Activated CD8-positive, alpha-beta T cell treated with anti-CD3 and anti-CD28 coated beads for 36 hours (primary cell): ENCODE measurements at regions of chr16 and their contacts with region 1.

Region 1: DNA sequence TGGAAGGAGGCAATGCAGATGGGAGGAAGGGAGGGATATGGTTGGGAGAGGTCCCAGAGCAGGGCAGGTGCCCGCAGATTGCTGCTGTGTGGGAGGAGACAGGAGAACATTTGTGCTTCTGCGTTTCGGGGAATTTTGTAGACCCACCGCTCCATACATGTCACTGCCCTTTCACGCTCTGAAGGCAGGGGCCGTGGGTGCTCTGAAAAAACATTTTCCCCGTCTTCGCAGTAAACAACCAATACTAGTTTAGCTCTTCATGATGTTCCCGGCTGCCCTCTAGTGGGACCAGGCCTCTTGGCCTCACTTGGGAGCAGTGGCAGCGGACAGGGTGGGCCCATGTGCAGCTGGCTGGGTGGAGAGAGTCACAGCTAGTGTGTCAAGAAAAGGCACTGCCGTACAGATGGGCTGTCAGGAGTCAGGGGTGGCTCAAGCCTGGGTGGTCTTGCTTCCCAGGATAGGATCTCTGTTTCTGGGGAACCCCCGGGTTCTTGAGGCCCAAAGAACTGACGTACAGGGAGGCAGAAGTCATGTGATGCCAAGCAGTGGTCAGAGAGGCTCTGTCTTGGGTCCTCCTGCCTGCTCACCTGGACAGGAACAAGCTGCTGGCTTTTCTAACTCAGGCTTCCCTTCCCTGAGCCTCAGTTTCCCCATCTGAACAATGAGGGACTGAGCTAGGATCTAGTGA is 46.5 kb upstream of the CPNE2 start:
- DNase-seq: peak; percentile 77
- ATAC-seq: no peak
- H3K4me3 Mint-ChIP-seq: no peak overlapping the region
- H3K27ac Mint-ChIP-seq: peak overlapping the region; percentile 99
- H3K4me1 Mint-ChIP-seq: peaks cover 77% of the 10 kb centered on the region
- H3K27me3 Mint-ChIP-seq: no peaks in the 10 kb centered on the region
- CTCF ChIP-seq: no peak

Region 2: DNA sequence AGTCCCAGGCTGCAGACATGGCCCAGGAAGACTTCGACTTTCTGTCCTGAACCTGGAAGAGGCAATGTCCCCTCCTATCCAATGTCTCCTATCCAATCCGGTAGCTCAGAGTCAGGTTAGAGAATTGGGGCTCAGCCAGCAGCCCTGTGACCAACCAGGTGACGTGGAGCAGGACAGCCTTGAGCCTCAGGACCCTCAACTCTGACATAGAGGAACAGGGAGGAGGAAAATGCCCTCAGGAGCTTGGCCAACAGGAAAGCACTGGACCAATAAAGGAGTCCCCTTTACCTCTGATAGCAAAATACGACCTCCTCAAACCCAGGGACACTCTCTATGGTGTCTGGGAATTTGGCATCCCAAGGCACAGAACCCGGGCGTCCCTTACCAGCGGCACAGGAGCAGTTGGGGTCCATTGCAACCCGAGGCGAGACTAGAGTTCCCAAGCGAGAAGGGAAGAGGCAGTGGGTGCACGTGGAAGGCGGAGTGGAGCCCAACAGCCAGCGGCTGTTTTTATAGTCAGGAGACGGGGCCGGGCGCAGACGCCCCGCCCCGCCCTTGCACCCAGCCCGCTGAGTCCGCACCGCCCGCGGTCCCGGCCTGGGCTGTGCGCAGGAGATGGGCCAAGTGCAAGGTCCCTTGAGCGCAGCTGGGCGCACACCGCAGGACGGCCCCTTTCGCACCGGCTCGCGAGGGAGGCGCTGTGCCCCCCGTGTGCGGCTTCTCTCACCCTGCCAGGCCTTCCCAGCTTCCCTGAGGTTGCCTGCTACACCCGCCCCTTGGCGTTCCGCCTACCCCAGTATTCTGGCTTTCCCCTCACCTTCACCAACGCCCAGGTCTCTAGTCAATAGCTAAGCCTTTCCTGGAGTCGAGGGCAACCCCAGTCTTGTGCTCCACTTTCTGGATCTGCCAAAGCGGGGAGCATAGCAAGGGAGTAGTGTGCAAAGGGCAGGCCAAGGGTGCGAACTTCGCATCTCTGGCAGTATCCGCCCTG is 378.0 kb before region 1 on chr16 and contains the start of gene MT1G:
- CTCF ChIA-PET with region 1: no interaction called
- POLR2A ChIA-PET with region 1: no interaction called
- intact Hi-C with region 1: no loop called
- DNase-seq: peak; percentile 58
- ATAC-seq: peak; percentile 75
- H3K4me3 Mint-ChIP-seq: peak within 1 kb of the TSS; percentile 65
- H3K27ac Mint-ChIP-seq: no peak within 1 kb of the TSS
- H3K4me1 Mint-ChIP-seq: peaks cover 20% of the 10 kb centered on the region
- H3K27me3 Mint-ChIP-seq: peaks cover 72% of the 10 kb centered on the region
- CTCF ChIP-seq: no peak
- total RNA-seq, gene MT1G: 35.9 to 39.0 TPM

Region 3: GRCh38 chr16:57013229-57013628 is 32.6 kb before region 1 on chr16:
- CTCF ChIA-PET with region 1: interaction called, 17 read pairs
- POLR2A ChIA-PET with region 1: interaction called, 63 read pairs
- intact Hi-C with region 1: loop called (anchors 1 kb)
- DNase-seq: no peak
- ATAC-seq: no peak
- H3K4me3 Mint-ChIP-seq: peak overlapping the region; percentile 51
- H3K27ac Mint-ChIP-seq: peak overlapping the region; percentile 97
- H3K4me1 Mint-ChIP-seq: peaks cover 81% of the 10 kb centered on the region
- H3K27me3 Mint-ChIP-seq: no peaks in the 10 kb centered on the region
- CTCF ChIP-seq: no peak

Region 4: DNA sequence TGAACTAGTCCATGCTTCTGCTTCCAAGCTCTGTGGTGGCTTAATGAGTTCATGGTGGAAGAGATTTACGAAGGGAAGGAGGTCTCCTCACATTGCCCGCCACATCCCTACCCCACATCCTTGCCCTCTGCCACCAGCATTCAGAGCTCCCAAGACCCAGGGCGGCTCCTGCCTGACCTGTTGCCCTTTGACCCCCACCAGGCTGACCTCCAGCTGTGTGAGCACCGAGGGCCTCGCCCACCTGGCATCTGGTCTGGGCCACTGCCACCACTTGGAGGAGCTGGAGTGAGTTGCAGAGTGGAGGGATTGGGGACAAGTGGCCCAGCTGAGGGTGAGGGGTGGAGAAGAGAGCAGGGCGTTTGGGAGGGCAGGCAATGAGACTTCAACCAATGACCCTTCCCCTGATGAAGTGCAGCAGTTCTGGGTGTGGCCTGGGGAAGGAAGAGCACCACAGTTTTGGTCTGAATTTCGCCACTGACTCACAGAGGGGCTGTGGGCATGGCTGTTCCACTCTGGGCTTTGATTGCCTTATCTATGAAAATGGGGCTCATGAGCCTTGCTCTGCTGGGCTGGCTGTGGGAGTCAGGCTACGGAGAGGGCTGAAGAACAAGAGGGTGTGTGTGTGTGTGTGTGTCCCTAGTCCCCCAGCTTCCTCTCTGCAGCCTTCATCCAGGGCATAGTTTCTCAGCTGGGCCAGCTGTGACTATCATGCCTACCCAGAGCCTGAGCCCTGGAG is 24.0 kb after region 1 on chr16:
- CTCF ChIA-PET with region 1: no interaction called
- POLR2A ChIA-PET with region 1: no interaction called
- intact Hi-C with region 1: no loop called
- DNase-seq: no peak
- ATAC-seq: no peak
- H3K4me3 Mint-ChIP-seq: no peak overlapping the region
- H3K27ac Mint-ChIP-seq: peak overlapping the region; percentile 62
- H3K4me1 Mint-ChIP-seq: peaks cover 33% of the 10 kb centered on the region
- H3K27me3 Mint-ChIP-seq: no peaks in the 10 kb centered on the region
- CTCF ChIP-seq: no peak

Region 5: DNA sequence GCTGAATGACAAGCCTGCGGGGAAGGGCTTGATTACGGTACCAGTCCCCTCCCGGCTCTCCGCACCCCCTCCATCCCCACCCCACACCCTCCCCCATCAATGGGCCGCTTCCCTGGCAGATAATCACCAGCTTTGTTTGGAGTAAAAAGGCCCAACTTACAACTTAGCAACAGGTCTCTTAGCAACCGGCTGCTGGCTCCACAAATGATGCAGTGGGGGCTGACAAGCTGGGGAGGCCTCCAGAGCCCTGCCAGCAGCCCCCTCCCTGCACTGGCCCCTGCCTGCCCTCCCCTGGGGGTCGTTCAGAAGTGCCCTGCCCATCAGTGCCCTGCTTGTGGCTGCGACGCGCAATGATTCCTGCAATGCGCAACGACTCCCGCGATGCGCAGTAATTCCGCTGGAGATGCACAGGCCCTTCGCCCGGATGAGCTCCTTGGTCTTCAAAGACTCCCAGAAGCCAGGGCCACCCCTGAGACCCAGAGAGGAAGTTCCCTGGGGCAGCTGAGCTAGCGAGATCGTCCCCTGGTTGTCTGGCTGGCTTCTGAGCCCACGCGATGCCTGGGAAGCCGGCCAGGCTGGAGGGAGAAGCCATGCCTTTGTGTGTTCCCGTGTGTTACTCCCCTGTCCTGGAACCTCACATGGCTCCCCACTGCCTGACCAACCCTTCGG is 69.8 kb after region 1 on chr16:
- CTCF ChIA-PET with region 1: no interaction called
- POLR2A ChIA-PET with region 1: no interaction called
- intact Hi-C with region 1: no loop called
- DNase-seq: no peak
- ATAC-seq: no peak
- H3K4me3 Mint-ChIP-seq: no peak overlapping the region
- H3K27ac Mint-ChIP-seq: no peak overlapping the region
- H3K4me1 Mint-ChIP-seq: peaks cover 8% of the 10 kb centered on the region
- H3K27me3 Mint-ChIP-seq: no peaks in the 10 kb centered on the region
- CTCF ChIP-seq: no peak